ENCODE measurements at regions of chr6 and their contacts with region 1.

Region 1: DNA sequence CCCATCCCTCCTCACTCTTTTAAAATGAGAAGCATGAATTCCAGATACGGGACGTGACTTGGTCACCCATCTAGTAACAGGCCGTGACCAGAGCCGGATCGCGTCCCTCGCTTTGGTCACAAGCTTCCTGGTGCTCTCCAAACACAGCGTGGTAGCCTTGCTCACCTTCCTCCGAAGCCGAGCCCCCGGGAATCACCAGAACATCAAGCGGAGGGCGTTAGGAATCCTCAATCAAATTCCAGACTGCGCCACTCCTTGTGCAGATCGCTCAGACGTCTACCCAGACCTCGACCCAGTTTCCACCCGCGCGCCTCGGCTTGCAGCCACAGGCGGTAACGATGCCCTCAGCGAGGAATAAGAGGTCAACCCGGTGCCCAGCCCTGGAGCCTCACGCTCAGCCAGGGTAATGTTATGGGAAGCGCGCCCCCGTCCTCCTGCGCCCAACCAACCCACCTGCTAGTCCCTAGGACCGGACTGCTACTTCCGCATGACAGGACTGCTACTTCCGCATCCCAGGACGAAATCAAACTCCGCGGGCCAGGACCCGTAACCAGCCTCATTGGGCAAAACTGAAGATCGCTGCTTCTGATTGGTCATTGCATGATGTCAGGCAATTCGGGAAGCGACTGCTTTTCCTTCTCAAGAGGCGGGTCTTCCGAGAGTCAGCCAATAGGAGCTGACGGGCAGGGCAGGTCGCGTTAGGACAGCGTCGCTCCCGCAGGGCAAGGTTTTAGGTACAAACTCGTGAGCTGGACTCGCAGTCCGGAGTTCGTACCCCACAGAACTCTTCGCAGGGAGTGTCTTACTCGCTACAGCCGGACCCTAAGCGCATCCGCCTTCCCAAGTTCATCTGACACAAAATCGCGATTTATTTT is at the start of gene MTFR2:
- DNase-seq: peak; percentile 96
- H3K4me3 Mint-ChIP-seq: peak within 1 kb of the TSS; percentile 96
- H3K27ac Mint-ChIP-seq: peak within 1 kb of the TSS; percentile 82
- H3K4me1 Mint-ChIP-seq: peaks cover 78% of the 10 kb centered on the region
- H3K27me3 Mint-ChIP-seq: no peaks in the 10 kb centered on the region
- total RNA-seq, gene MTFR2: 20.4 to 21.4 TPM

Region 2: DNA sequence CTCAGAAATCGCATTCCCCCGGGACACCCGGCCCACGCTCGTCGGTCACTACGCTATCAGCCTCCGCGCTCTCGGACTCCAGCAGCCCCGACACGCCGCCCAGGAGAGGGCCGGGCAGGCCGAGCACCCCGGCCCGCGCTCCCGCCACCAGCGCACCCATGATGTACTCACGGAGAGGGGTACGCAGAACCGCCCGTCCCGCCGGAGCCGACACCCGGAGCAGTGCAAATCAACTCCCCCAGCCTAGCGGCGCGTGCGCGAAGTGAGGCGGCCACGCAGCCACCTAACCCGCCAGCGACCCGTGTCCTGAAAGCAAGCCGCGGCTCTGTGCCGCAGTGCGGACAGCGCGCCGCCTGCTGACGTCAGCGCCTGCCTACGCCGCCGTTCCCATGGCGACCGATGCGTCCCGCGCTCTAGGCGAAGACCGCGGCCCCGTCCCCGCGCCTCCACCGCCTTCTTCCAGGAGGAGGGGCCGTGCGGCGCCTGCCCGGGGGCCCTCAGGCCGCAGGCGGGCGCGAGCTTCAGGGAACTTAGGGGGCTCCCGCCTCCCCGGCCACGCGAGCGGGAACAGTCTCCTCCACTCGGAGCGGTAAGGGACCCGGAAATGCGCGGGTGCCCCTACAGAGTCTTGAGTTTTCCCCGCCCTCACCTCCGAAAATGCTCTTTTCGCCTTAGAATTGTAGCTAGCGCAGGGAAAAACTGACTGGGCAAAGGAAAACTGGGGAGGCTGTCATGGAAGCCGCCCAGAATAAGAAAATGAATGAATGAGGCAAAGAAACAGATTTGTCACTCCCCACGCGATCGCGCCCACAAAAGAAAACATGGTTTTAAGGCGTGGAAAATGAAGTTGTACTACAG is 752.4 kb before region 1 on chr6 and contains the start of gene AHI1:
- CTCF ChIA-PET with region 1: no interaction called
- POLR2A ChIA-PET with region 1: interaction called, 10 read pairs
- DNase-seq: peak; percentile 88
- H3K4me3 Mint-ChIP-seq: no peak within 1 kb of the TSS
- H3K27ac Mint-ChIP-seq: no peak within 1 kb of the TSS
- H3K4me1 Mint-ChIP-seq: peaks cover 16% of the 10 kb centered on the region
- H3K27me3 Mint-ChIP-seq: peaks cover 3% of the 10 kb centered on the region
- total RNA-seq, gene AHI1: 18.5 to 21.5 TPM

Region 3: GRCh38 chr6:136262940-136263339 is 12.9 kb after region 1 on chr6:
- CTCF ChIA-PET with region 1: interaction called, 4 read pairs
- POLR2A ChIA-PET with region 1: interaction called, 15 read pairs
- DNase-seq: no peak
- H3K4me3 Mint-ChIP-seq: no peak overlapping the region
- H3K27ac Mint-ChIP-seq: no peak overlapping the region
- H3K4me1 Mint-ChIP-seq: peaks cover 24% of the 10 kb centered on the region
- H3K27me3 Mint-ChIP-seq: no peaks in the 10 kb centered on the region

Measured in activated CD4-positive, alpha-beta memory T cell treated with anti-CD3 and anti-CD28 coated beads, Interleukin-2, amount 10 ng/mL, durations not matched to agents 7 days and 5 days (primary cell).